ENCODE measurements at regions of chr1 and their contacts with region 1.

Region 1: DNA sequence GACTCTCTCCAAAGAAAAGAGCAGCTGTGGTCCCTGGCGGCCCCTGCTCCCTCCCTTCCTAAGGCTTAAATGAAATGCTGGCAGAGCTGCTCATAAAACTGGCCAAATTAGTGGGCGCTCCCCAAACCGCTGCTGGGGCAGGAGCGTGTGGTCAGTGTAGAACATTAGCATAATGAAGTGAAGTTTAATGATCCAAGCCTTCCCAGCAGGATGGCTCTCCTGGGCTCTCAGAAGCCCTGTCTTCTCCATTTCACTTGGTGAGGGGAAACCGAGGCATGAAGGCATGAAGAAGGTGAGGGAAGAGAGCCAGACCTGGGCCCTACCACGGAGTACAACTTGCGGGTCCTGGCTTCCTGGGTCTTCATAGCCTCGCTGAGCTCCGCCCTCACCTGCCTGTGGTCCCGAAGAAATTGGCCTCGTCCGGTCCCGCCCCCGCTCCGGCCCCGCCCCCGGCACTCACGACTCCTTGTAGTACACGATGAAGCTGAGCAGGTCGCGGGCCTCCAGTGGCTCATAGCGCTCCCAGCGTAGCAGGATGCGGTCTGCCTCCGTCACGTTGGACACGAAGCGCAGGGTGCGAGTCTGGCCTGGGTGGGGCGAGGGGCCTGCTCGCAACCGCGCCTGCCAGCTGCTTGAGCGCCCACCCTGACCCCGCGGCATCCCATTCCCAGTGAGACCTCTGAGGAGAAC is 10.3 kb downstream of the INSRR start:
- DNase-seq: peak in 1 of 2 donors; percentile 37
- H3K4me3 ChIP-seq: peak overlapping the region in 1 of 3 donors; percentile 35
- H3K27ac ChIP-seq: no peak overlapping the region
- H3K4me1 ChIP-seq: no peaks in the 10 kb centered on the region
- H3K27me3 ChIP-seq: peaks cover 0 to 29% of the 10 kb centered on the region in 2 donors
- CTCF ChIP-seq: no peak
- POLR2A ChIP-seq: no peak

Region 2: DNA sequence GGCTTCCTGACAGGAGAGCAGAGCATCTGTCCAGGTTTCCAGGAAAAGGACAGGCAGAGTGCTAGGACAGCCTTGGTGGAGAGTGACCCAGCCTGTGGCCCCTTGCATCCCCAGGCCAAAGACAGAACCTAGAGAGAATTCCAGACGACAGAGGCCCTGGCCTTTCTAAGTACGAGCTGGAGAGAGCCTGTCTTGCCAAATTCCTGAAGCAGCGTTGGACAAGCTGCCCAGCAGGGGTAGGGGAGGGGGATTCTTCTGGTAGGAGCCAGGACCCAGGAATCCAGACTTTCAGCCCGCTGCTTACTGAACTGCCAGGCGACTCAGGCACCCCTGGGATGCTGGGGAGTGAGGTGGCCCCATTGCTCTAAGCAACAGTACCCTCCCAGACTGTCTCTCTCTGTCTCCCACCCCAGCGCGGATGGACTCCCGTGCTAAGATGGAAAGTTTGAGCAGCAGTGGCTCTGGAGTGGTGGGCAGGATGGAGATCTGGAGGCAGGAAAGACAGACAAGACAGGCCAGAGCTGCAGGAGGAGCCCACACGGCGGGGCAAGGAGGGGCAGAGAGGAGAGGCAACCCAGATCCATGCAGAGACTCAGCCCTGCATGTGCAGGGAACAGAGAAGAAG is 36.1 kb after region 1 on chr1:
- intact Hi-C with region 1: loop called (anchors 1 kb)
- DNase-seq: no peak
- H3K4me3 ChIP-seq: no peak overlapping the region
- H3K27ac ChIP-seq: peak overlapping the region in 1 of 2 donors; percentile 77
- H3K4me1 ChIP-seq: no peaks in the 10 kb centered on the region
- H3K27me3 ChIP-seq: peaks cover 0 to 6% of the 10 kb centered on the region in 2 donors
- CTCF ChIP-seq: no peak
- POLR2A ChIP-seq: no peak